B cell (primary cell): ENCODE measurements at regions of chr1 and their contacts with region 1.

Region 1: GRCh38 chr1:109282952-109283747 is at the start of gene PSRC1:
- DNase-seq: peak; percentile 94
- ATAC-seq: peak; percentile 99
- H3K4me3 ChIP-seq: peak within 1 kb of the TSS; percentile 68 to 93 (median 80)
- H3K4me3 Mint-ChIP-seq: peak within 1 kb of the TSS; percentile 97
- H3K27ac ChIP-seq: peak within 1 kb of the TSS in 1 of 2 donors; percentile 22
- H3K27ac Mint-ChIP-seq: peak within 1 kb of the TSS; percentile 88
- H3K4me1 ChIP-seq: peaks cover 12 to 19% of the 10 kb centered on the region in 2 donors
- H3K4me1 Mint-ChIP-seq: peaks cover 16% of the 10 kb centered on the region
- H3K27me3 ChIP-seq: no peaks in the 10 kb centered on the region
- H3K27me3 Mint-ChIP-seq: peaks cover 3% of the 10 kb centered on the region
- CTCF ChIP-seq: peak; percentile 71
- total RNA-seq, gene PSRC1: not detected in 2 replicates

Region 2: GRCh38 chr1:107662971-107663370 is 1620.2 kb before region 1 on chr1:
- CTCF ChIA-PET with region 1: no interaction called
- POLR2A ChIA-PET with region 1: no interaction called
- intact Hi-C with region 1: no loop called
- DNase-seq: no peak
- ATAC-seq: no peak
- H3K4me3 ChIP-seq: no peak overlapping the region
- H3K4me3 Mint-ChIP-seq: no peak overlapping the region
- H3K27ac ChIP-seq: no peak overlapping the region
- H3K27ac Mint-ChIP-seq: no peak overlapping the region
- H3K4me1 ChIP-seq: no peaks in the 10 kb centered on the region
- H3K4me1 Mint-ChIP-seq: no peaks in the 10 kb centered on the region
- H3K27me3 ChIP-seq: no peaks in the 10 kb centered on the region
- H3K27me3 Mint-ChIP-seq: no peaks in the 10 kb centered on the region
- CTCF ChIP-seq: no peak

Region 3: GRCh38 chr1:108828022-108828961 is 454.9 kb before region 1 on chr1:
- CTCF ChIA-PET with region 1: no interaction called
- POLR2A ChIA-PET with region 1: no interaction called
- intact Hi-C with region 1: no loop called
- DNase-seq: peak; percentile 72
- ATAC-seq: no peak
- H3K4me3 ChIP-seq: no peak overlapping the region
- H3K4me3 Mint-ChIP-seq: no peak overlapping the region
- H3K27ac ChIP-seq: no peak overlapping the region
- H3K27ac Mint-ChIP-seq: no peak overlapping the region
- H3K4me1 ChIP-seq: peaks cover 0 to 3% of the 10 kb centered on the region in 2 donors
- H3K4me1 Mint-ChIP-seq: no peaks in the 10 kb centered on the region
- H3K27me3 ChIP-seq: peaks cover 0 to 3% (median 0%) of the 10 kb centered on the region in 4 experiments
- H3K27me3 Mint-ChIP-seq: no peaks in the 10 kb centered on the region
- CTCF ChIP-seq: no peak

Region 4: GRCh38 chr1:109099938-109100773 is 183.0 kb before region 1 on chr1:
- CTCF ChIA-PET with region 1: no interaction called
- POLR2A ChIA-PET with region 1: no interaction called
- intact Hi-C with region 1: no loop called
- DNase-seq: peak; percentile 98
- ATAC-seq: peak; percentile 89
- H3K4me3 ChIP-seq: peak overlapping the region; percentile 45 to 90 (median 85)
- H3K4me3 Mint-ChIP-seq: peak overlapping the region; percentile 94
- H3K27ac ChIP-seq: peak overlapping the region; percentile 91 to 94
- H3K27ac Mint-ChIP-seq: peak overlapping the region; percentile 97
- H3K4me1 ChIP-seq: peaks cover 8 to 17% of the 10 kb centered on the region in 2 donors
- H3K4me1 Mint-ChIP-seq: peaks cover 8% of the 10 kb centered on the region
- H3K27me3 ChIP-seq: no peaks in the 10 kb centered on the region
- H3K27me3 Mint-ChIP-seq: no peaks in the 10 kb centered on the region
- CTCF ChIP-seq: peak; percentile 82

Region 5: GRCh38 chr1:109307274-109308021 is 24.3 kb after region 1 on chr1:
- CTCF ChIA-PET with region 1: interaction called, 27 read pairs
- POLR2A ChIA-PET with region 1: no interaction called
- intact Hi-C with region 1: loop called (anchors 1 kb)
- DNase-seq: peak; percentile 62
- ATAC-seq: peak; percentile 96
- H3K4me3 ChIP-seq: peak overlapping the region in 3 of 5 experiments; percentile 15 to 41 (median 27)
- H3K4me3 Mint-ChIP-seq: peak overlapping the region; percentile 62
- H3K27ac ChIP-seq: peak overlapping the region; percentile 36 to 55
- H3K27ac Mint-ChIP-seq: peak overlapping the region; percentile 75
- H3K4me1 ChIP-seq: peaks cover 19 to 20% of the 10 kb centered on the region in 2 donors
- H3K4me1 Mint-ChIP-seq: peaks cover 14% of the 10 kb centered on the region
- H3K27me3 ChIP-seq: peaks cover 0 to 14% (median 6%) of the 10 kb centered on the region in 4 experiments
- H3K27me3 Mint-ChIP-seq: no peaks in the 10 kb centered on the region
- CTCF ChIP-seq: no peak

Region 6: GRCh38 chr1:109532365-109533136 is 249.4 kb after region 1 on chr1:
- CTCF ChIA-PET with region 1: interaction called, 76 read pairs
- POLR2A ChIA-PET with region 1: no interaction called
- intact Hi-C with region 1: no loop called
- DNase-seq: peak; percentile 88
- ATAC-seq: peak; percentile 90
- H3K4me3 ChIP-seq: peak overlapping the region in 4 of 5 experiments; percentile 37 to 67 (median 52)
- H3K4me3 Mint-ChIP-seq: peak overlapping the region; percentile 90
- H3K27ac ChIP-seq: peak overlapping the region in 1 of 2 donors; percentile 21
- H3K27ac Mint-ChIP-seq: peak overlapping the region; percentile 87
- H3K4me1 ChIP-seq: peaks cover 4 to 11% of the 10 kb centered on the region in 2 donors
- H3K4me1 Mint-ChIP-seq: peaks cover 11% of the 10 kb centered on the region
- H3K27me3 ChIP-seq: no peaks in the 10 kb centered on the region
- H3K27me3 Mint-ChIP-seq: no peaks in the 10 kb centered on the region
- CTCF ChIP-seq: peak; percentile 93